ENCODE measurements at regions of chr22 and their contacts with region 1.

Region 1: DNA sequence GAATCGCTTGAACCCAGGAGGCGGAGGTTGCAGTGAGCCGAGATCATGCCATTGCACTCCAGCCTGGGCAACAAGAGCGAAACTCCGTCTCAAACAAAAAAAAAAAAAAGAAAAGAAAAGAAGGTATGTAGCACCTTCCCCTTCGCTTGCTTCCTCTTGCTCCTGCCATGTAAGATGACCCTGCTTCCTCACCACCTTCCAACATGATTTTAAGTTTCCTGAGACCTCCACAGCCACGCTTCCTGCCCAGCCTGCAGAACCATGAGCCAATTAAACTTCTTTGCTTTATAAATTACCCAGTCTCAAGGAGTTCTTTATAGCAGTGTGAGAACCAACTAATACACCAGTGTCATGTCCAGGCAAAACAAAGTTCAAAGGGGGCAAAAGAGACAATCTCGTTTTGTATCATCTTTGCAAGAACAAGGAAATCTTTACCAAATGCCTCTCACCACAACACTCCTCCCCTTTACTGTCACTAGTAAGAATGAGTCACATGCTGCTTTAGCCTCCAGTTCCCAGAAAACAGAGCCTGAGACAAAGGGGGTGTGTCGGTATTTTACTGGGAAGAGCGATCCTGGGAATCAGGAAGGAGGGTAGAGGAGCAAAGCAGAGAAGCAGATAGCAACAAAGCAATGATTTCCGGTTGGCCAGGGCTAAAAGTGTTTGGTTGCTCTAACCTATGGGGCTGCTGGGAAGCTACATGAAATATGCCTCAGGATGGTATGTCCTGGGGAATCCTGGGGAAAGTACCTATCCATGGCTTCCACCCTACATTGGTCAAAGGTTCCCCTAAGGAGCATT is 10.5 kb upstream of the MCHR1 start:
- DNase-seq: no peak
- H3K4me3 ChIP-seq: no peak overlapping the region
- H3K27ac ChIP-seq: no peak overlapping the region
- H3K4me1 ChIP-seq: peaks cover 7 to 18% of the 10 kb centered on the region in 2 donors
- H3K27me3 ChIP-seq: no peaks in the 10 kb centered on the region
- CTCF ChIP-seq: no peak

Region 2: DNA sequence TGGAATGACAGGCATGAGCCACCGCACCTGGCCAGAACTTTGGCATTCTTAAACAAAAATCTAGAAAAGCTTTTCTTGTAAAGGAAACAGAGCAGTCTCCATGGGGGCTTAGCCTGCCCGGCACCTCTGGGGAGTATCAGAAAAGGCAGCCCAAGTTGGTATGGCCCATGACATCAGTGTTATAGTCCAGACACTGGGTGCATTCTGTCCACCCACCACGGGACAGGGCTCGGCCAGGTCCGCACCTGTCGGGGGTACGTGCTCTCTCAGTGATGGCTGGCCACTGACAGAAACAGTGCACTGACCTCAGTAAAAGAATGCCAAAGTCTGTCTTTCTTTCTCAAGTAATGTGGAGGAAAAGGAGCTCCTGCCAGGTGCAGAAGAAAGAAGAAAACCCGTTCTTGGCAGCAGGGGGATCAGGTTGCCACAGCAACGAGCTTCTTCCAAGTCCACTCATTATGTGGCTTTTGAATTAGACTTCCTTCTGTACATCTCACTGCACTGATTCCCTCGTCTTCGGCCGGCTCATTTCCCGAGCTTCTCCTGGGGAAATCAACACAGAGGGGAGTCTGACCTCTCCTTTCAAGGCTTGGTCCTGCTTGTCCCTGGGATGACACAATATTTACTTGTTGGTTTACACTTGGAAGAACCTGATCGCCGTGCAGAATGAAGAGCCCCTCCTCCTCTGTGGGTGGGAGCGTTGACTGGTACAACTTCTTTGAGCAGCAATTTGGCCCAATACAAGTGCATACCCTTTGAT is 45.6 kb after region 1 on chr22:
- intact Hi-C with region 1: loop called (anchors 5 kb)
- DNase-seq: no peak
- H3K4me3 ChIP-seq: no peak overlapping the region
- H3K27ac ChIP-seq: peak overlapping the region; percentile 16 to 32
- H3K4me1 ChIP-seq: peaks cover 14% of the 10 kb centered on the region in 2 donors
- H3K27me3 ChIP-seq: no peaks in the 10 kb centered on the region
- CTCF ChIP-seq: no peak

Region 3: GRCh38 chr22:40764763-40765441 is 96.1 kb after region 1 on chr22:
- intact Hi-C with region 1: loop called (anchors 5 kb)
- DNase-seq: no peak
- H3K4me3 ChIP-seq: no peak overlapping the region
- H3K27ac ChIP-seq: no peak overlapping the region
- H3K4me1 ChIP-seq: no peaks in the 10 kb centered on the region
- H3K27me3 ChIP-seq: no peaks in the 10 kb centered on the region
- CTCF ChIP-seq: no peak